ENCODE measurements at regions of chr1 and their contacts with region 1.

Region 1: DNA sequence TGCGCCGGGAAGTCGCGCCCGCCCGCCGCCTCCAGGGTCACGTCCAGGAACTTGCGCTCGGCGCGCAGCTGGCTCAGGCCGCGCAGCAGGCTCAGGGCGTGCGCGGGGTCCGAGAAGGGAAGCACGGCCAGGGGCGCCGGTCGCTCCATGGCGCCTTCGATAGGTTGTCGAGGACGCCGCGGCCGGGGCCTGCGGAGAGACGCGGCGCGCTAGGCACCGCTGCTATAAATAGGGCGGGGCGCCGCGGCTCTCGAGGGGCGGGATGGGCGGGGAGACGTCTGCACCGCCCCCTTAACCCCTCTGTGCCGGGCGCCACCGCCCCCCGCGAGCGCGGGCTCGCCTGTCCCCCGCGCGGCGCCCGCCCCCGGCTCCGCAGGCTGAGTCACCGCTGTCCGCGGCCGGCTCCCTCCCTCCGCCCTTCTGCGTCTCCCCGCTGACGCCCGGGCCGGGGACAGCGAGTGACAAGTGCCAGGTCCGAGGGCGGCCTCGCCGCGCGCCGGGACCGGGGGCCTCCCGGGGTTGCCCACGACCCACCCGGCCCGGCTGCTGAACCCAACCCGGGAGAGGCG is at the start of gene KLHL21:
- DNase-seq: peak; percentile 84
- H3K4me3 ChIP-seq: peak within 1 kb of the TSS; percentile 39 to 84 (median 74)
- H3K27ac ChIP-seq: peak within 1 kb of the TSS; percentile 86
- H3K4me1 ChIP-seq: peaks cover 23% of the 10 kb centered on the region
- H3K27me3 ChIP-seq: no peaks in the 10 kb centered on the region
- CTCF ChIP-seq: no peak
- POLR2A ChIP-seq: peak; percentile 99
- total RNA-seq, gene KLHL21: 19.2 and 22.4 TPM in 2 replicates

Region 2: GRCh38 chr1:6554031-6554906 is 48.5 kb before region 1 on chr1 and contains the start of gene NOL9:
- CTCF ChIA-PET with region 1: interaction called, 10 read pairs
- POLR2A ChIA-PET with region 1: interaction called, 3 read pairs
- dilution Hi-C with region 1: no loop called
- intact Hi-C with region 1: loop called (anchors 1 kb)
- DNase-seq: peak; percentile 94
- H3K4me3 ChIP-seq: peak within 1 kb of the TSS; percentile 61 to 100 (median 100)
- H3K27ac ChIP-seq: peak within 1 kb of the TSS; percentile 68
- H3K4me1 ChIP-seq: peaks cover 9% of the 10 kb centered on the region
- H3K27me3 ChIP-seq: no peaks in the 10 kb centered on the region
- CTCF ChIP-seq: peak; percentile 93 to 99
- POLR2A ChIP-seq: peak; percentile 84
- total RNA-seq, gene NOL9: 39.7 and 42.9 TPM in 2 replicates

Region 3: GRCh38 chr1:6613361-6614018 is 10.7 kb after region 1 on chr1 and contains the start of gene PHF13:
- CTCF ChIA-PET with region 1: interaction called, 4 read pairs
- POLR2A ChIA-PET with region 1: interaction called, 6 read pairs
- dilution Hi-C with region 1: no loop called
- intact Hi-C with region 1: loop called (anchors 1 kb)
- DNase-seq: peak; percentile 99
- H3K4me3 ChIP-seq: peak within 1 kb of the TSS; percentile 55 to 97 (median 93)
- H3K27ac ChIP-seq: peak within 1 kb of the TSS; percentile 32
- H3K4me1 ChIP-seq: peaks cover 5% of the 10 kb centered on the region
- H3K27me3 ChIP-seq: no peaks in the 10 kb centered on the region
- CTCF ChIP-seq: no peak
- POLR2A ChIP-seq: no peak
- total RNA-seq, gene PHF13: 17.8 and 18.6 TPM in 2 replicates

Region 4: DNA sequence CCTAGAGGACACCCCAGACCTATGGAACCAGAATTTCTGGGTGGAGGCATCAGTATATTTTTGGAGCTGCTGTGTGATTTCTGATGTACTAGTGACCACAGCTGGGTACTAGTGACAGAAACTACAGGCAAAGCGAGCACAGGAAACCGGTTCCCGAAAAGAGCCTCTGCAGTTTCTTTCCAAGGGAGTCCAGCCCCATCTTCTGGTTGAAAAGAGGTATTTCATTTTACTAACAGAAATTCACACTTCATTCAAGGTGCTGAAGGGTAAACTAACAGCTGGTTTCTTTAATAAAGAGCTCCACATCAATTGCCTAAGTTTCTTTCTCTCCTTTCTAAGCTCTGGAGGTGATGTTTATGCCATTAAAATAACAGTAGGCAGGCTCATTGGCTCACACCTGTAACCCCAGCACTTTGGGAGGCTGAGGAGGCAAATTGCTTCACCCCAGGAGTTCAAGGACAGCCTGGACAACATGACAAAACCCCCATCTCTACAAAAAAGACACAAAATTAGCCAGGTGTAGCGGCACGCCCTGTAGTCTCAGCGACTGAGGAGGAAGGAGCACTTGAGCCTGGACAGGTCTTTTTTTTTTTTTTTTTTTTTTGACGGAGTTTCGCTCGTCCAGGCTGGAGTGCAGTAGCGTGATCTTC is 43.9 kb after region 1 on chr1:
- CTCF ChIA-PET with region 1: interaction called, 12 read pairs
- POLR2A ChIA-PET with region 1: no interaction called
- dilution Hi-C with region 1: no loop called
- intact Hi-C with region 1: loop called (anchors 1 kb)
- DNase-seq: peak; percentile 47
- H3K4me3 ChIP-seq: no peak overlapping the region
- H3K27ac ChIP-seq: no peak overlapping the region
- H3K4me1 ChIP-seq: no peaks in the 10 kb centered on the region
- H3K27me3 ChIP-seq: no peaks in the 10 kb centered on the region
- CTCF ChIP-seq: peak; percentile 50 to 57
- POLR2A ChIP-seq: no peak

Region 5: GRCh38 chr1:6762060-6762459 is 159.3 kb after region 1 on chr1:
- CTCF ChIA-PET with region 1: no interaction called
- POLR2A ChIA-PET with region 1: no interaction called
- dilution Hi-C with region 1: no loop called
- intact Hi-C with region 1: no loop called
- DNase-seq: no peak
- H3K4me3 ChIP-seq: no peak overlapping the region
- H3K27ac ChIP-seq: no peak overlapping the region
- H3K4me1 ChIP-seq: no peaks in the 10 kb centered on the region
- H3K27me3 ChIP-seq: no peaks in the 10 kb centered on the region
- CTCF ChIP-seq: no peak
- POLR2A ChIP-seq: no peak